Endothelial cell of umbilical vein (primary cell): ENCODE measurements at regions of chr10 and their contacts with region 1.

Region 1: DNA sequence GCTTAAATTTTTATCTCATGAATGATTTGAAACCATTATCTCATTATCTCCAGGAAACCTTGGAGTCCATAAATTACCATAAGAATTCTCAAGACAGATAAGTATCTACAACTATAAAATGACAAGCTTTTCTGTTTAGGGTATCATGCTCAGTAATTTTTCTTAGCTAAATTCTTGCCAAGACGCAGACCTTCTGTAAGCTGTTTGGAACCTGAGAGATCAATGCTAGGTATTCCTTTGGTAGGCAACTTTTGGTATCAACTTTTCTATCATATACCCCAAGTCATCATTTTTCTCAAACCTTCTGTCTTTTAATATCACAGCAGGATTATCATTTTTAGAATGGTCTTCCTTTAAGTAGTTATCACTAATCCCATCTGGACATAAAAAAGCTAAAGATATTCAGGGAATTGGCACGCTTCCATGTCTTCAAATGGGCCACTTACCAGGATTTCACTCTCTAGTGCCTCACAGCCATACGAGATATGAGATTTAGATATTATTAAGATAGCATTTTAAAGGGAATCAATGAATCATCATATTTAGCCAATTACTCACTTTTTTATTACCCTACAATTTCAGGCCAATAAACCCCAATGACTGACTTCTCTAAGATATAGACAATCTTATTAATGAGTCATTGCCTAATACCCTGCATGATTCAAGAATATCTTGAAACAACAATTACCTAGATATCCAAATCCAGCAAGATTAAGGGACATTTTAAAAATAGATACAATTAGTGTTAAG is 544.1 kb downstream of the HTR7 start:
- DNase-seq: peak; percentile 76
- H3K4me3 ChIP-seq: no peak overlapping the region
- H3K27ac ChIP-seq: no peak overlapping the region
- H3K4me1 ChIP-seq: peaks cover 28% of the 10 kb centered on the region
- H3K27me3 ChIP-seq: no peaks in the 10 kb centered on the region
- CTCF ChIP-seq: no peak
- POLR2A ChIP-seq: no peak

Region 2: DNA sequence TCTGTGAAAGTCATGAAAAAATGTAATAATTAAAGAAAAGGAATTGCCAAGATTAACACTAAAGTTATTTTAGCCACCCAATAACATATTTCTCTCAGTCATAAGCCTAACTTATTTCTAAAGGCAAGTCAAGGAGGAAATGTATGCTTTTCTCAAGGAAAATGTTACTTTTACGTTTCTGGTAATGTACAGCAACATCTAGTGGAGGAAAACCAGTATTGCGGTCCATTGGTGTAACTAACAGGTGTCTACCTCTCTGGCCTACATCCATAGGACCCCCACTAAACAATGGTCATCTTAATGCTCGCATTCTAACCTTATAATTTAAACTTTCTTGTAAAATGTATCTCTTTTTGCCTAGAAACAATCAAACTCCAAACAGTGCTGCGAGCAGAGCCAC is 174.9 kb before region 1 on chr10:
- CTCF ChIA-PET with region 1: no interaction called
- POLR2A ChIA-PET with region 1: no interaction called
- dilution Hi-C with region 1: no loop called
- intact Hi-C with region 1: no loop called
- DNase-seq: peak; percentile 6
- H3K4me3 ChIP-seq: no peak overlapping the region
- H3K27ac ChIP-seq: no peak overlapping the region
- H3K4me1 ChIP-seq: no peaks in the 10 kb centered on the region
- H3K27me3 ChIP-seq: peaks cover 0 to 4% of the 10 kb centered on the region in 2 experiments
- CTCF ChIP-seq: peak; percentile 28 to 31
- POLR2A ChIP-seq: no peak

Region 3: GRCh38 chr10:90227217-90227656 is 86.5 kb before region 1 on chr10:
- CTCF ChIA-PET with region 1: no interaction called
- POLR2A ChIA-PET with region 1: no interaction called
- dilution Hi-C with region 1: no loop called
- intact Hi-C with region 1: loop called (anchors 1 kb)
- DNase-seq: peak; percentile 88
- H3K4me3 ChIP-seq: no peak overlapping the region
- H3K27ac ChIP-seq: peak overlapping the region; percentile 66
- H3K4me1 ChIP-seq: peaks cover 26% of the 10 kb centered on the region
- H3K27me3 ChIP-seq: no peaks in the 10 kb centered on the region
- CTCF ChIP-seq: no peak
- POLR2A ChIP-seq: no peak

Region 4: DNA sequence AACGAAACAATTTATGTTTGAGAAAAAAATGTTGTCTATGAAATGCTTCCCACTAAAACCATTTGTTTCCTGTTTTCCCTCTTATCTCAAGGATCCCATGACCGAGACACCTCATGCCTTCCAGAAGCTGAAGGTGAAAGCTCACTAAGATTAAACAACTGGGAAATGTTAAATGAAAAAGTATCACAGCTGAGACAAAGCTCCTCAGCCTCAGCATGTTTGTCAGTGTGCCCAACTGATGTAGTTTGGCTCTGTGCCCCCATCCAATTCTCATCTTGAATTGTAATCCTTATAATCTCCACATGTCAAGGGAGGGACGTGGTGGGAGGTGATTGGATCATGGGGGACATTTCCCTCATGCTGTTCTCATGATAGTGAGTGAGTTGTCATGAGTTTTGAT is 216.8 kb after region 1 on chr10:
- CTCF ChIA-PET with region 1: no interaction called
- POLR2A ChIA-PET with region 1: no interaction called
- dilution Hi-C with region 1: no loop called
- intact Hi-C with region 1: loop called (anchors 2 kb)
- DNase-seq: peak; percentile 58
- H3K4me3 ChIP-seq: no peak overlapping the region
- H3K27ac ChIP-seq: no peak overlapping the region
- H3K4me1 ChIP-seq: no peaks in the 10 kb centered on the region
- H3K27me3 ChIP-seq: no peaks in the 10 kb centered on the region
- CTCF ChIP-seq: no peak
- POLR2A ChIP-seq: no peak